RWPE1 (cell line): ENCODE measurements at regions of chr5 and their contacts with region 1.

Region 1: DNA sequence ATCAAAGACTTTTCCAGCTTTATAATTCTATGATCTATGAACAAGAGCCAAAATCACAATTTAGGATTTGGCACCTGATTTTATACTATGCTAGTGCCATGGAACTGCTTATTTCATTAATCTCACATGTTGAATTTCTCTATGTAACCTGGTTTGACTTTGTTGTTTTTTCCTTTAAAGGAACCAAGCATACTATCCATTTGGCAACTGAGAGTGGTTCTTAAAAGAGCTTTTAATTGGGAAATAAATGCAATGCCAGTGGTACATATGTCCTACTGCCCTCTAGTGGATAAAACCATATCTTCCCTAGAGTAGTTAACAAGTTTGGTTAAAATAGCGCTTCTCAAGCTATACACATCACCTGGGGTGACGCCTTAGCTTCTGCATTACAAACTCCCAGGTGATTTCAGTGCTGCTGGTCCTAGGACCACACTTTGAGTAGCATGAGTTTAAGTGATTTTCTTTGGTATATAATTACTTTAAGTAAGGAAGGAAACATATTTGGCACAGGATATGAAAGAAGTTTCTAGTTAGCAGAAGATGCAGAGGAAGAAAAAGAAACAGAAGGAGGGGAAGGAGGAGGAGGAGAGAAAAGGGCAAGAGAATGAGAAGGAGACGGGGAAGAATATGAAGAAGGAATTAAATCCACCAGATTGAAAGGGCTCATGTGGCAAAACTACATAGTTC is 56.8 kb downstream of the FGF10 start:
- DNase-seq: peak; percentile 41
- H3K27ac ChIP-seq: no peak overlapping the region
- CTCF ChIP-seq: peak; percentile 79

Region 2: DNA sequence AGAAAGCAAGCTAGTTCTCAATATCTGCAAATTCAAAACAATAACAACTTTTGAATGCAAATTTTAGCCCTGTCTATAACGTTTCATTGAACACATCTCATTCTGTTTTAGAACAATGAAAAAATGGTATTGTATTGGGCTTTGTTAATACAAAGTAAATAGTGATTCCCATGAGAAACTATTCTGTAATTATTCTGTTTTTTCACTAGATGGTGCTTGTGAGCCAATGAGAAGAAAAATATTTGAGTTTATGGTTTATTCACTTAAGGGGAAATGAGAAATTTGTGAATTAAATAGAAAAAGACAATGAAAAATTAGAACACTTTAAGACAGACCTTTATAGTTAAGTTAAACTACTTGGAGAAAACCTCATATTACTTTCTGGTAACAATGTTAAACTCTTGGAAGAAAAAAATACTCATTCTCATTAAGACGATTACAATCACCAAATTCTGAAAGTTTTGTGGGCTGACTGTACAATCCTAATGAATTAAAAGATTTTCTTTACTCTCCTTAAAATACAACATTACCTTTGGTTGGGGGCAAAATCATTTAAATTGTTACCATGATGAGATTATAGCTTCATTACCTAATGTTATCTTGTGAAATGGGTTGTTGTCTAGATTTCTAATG is 602.5 kb before region 1 on chr5:
- CTCF ChIA-PET with region 1: interaction called, 23 read pairs
- POLR2A ChIA-PET with region 1: no interaction called
- DNase-seq: no peak
- H3K27ac ChIP-seq: no peak overlapping the region
- CTCF ChIP-seq: peak; percentile 87